ENCODE measurements at regions of chr3 and their contacts with region 1.

Region 1: DNA sequence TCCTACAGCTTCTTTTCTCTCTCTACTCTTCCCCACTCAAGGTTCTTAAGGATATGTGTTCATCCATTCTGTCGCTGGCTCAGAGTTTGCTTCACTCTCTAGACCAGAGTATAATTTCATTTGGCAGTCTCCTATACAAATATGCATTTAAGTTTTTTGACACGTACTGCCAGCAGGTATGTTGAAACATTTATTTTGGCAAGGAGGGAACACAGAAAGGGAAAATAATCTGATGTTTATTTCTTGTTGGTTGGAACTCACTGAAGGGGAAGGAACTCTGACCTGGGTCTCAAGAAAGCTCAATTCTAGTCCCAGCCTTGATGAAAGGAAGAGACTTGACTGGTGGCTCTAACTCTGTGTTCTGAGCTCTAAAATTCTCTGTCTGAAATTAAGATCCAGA is 21.6 kb downstream of the FANCD2 start:
- DNase-seq: no peak
- ATAC-seq: no peak
- H3K4me3 ChIP-seq: no peak overlapping the region
- H3K27ac ChIP-seq: no peak overlapping the region
- H3K4me1 ChIP-seq: no peaks in the 10 kb centered on the region
- H3K27me3 ChIP-seq: no peaks in the 10 kb centered on the region
- CTCF ChIP-seq: no peak
- POLR2A ChIP-seq: no peak
- RAD21 ChIP-seq: no peak

Region 2: GRCh38 chr3:9736831-9737230 is 311.0 kb before region 1 on chr3:
- CTCF ChIA-PET with region 1: no interaction called
- POLR2A ChIA-PET with region 1: no interaction called
- RAD21 ChIA-PET with region 1: no interaction called
- intact Hi-C with region 1: no loop called
- DNase-seq: no peak
- ATAC-seq: no peak
- H3K4me3 ChIP-seq: no peak overlapping the region
- H3K27ac ChIP-seq: no peak overlapping the region
- H3K4me1 ChIP-seq: peaks cover 9 to 14% of the 10 kb centered on the region in 2 experiments; a peak in 3 of 4 replicates
- H3K27me3 ChIP-seq: no peaks in the 10 kb centered on the region
- CTCF ChIP-seq: no peak
- POLR2A ChIP-seq: no peak
- RAD21 ChIP-seq: no peak

Region 3: DNA sequence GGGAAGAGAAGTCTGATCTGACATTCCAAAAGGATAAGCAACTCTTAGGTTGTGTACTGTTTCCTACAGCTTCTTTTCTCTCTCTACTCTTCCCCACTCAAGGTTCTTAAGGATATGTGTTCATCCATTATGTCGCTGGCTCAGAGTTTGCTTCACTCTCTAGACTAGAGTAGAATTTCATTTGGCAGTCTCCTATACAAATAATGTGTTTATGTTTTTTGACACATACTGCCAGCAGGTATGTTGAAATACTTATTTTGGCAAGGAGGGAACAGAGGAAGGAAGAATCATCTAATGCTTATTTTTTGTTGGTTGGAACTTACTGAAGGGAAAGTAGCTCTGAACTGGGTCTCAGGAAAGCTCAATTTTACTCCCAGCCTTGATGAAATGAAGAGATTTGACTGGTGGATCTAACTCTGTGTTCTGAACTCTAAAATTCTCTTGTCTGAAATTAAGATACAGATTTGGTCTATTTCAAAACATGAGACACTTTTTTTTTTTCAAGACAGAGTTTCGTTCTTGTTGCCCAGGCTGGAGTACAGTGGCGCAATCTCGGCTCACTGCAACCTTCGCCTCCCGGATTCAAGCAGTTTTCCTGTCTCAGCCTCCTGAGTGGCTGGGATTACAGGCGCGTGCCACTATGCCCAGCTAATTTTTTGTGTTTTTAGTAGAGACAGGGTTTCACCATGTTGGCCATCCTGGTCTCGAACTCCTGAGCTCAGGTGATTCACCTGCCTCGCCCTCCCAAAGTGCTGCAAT is 53.6 kb before region 1 on chr3:
- CTCF ChIA-PET with region 1: no interaction called
- POLR2A ChIA-PET with region 1: no interaction called
- RAD21 ChIA-PET with region 1: no interaction called
- intact Hi-C with region 1: loop called (anchors 1 kb)
- DNase-seq: no peak
- ATAC-seq: no peak
- H3K4me3 ChIP-seq: no peak overlapping the region
- H3K27ac ChIP-seq: no peak overlapping the region
- H3K4me1 ChIP-seq: no peaks in the 10 kb centered on the region
- H3K27me3 ChIP-seq: no peaks in the 10 kb centered on the region
- CTCF ChIP-seq: no peak
- POLR2A ChIP-seq: no peak
- RAD21 ChIP-seq: no peak